ENCODE measurements at regions of chr17 and their contacts with region 1.

Region 1: GRCh38 chr17:39508987-39509386 is 47.7 kb downstream of the CDK12 start:
- DNase-seq: no peak
- ATAC-seq: no peak
- H3K4me3 Mint-ChIP-seq: no peak overlapping the region
- H3K27ac Mint-ChIP-seq: no peak overlapping the region
- H3K4me1 Mint-ChIP-seq: no peaks in the 10 kb centered on the region
- H3K27me3 Mint-ChIP-seq: no peaks in the 10 kb centered on the region
- CTCF ChIP-seq: no peak

Region 2: DNA sequence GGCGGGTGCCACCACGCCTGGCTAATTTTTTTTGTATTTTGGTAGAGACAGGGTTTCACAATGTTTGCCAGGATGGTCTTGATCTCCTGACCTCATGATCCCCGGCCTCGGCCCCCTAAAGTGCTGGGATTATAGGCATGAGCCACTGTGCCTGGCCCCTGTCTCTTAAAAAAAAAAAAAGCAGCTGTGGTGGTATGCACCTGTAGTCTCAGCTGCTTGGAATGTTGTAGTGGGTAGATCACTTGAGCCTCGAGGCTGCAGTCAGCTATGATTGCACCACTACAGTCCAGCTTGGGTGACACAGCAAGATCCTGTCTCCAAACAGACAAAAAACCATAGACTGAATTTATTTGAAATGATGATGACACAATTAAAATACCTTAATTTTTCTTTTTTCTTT is 23.4 kb before region 1 on chr17:
- CTCF ChIA-PET with region 1: no interaction called
- POLR2A ChIA-PET with region 1: interaction called, 13 read pairs
- DNase-seq: no peak
- ATAC-seq: no peak
- H3K4me3 Mint-ChIP-seq: no peak overlapping the region
- H3K27ac Mint-ChIP-seq: no peak overlapping the region
- H3K4me1 Mint-ChIP-seq: no peaks in the 10 kb centered on the region
- H3K27me3 Mint-ChIP-seq: no peaks in the 10 kb centered on the region
- CTCF ChIP-seq: no peak

Measured in WTC11 (cell line).